PC-9 (cell line): ENCODE measurements at regions of chr17 and their contacts with region 1.

Region 1: DNA sequence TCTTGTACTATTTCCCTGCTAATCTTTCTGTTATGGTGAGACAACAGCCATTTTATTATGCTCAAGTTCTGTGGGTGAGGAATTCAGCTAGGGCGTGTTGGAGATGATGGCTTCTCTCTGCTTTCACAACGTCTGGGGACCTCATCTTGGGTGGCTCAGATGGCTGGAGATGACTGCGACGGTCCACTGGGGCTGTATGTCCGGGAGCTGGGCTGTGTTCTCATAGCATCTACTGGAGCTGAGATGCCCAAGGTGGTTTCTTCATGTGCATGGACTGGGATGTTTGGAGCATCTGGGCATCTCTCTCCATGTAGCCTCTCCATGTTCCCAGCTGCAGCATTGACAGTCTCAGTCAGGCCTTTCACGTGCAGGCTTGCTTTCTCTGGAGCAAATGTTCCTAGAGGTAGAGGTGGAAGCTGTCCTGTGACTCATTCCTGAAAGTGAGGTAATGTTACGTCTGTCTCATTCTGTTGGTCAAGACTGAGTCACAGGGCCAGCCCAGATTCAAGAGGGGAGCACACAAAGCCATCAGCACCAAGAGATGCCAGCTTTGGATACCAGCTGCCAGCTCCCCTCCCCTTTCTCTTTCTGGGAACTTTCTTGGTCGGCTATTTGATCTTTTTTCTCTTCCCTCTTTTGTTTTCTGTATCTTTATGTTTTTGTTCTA is 96.2 kb downstream of the RAP1GAP2 start:
- DNase-seq: peak; percentile 77 to 90
- H3K4me3 ChIP-seq: no peak overlapping the region
- H3K27ac ChIP-seq: peak overlapping the region; percentile 84
- H3K4me1 ChIP-seq: peaks cover 44% of the 10 kb centered on the region
- H3K27me3 ChIP-seq: no peaks in the 10 kb centered on the region
- CTCF ChIP-seq: no peak

Region 2: DNA sequence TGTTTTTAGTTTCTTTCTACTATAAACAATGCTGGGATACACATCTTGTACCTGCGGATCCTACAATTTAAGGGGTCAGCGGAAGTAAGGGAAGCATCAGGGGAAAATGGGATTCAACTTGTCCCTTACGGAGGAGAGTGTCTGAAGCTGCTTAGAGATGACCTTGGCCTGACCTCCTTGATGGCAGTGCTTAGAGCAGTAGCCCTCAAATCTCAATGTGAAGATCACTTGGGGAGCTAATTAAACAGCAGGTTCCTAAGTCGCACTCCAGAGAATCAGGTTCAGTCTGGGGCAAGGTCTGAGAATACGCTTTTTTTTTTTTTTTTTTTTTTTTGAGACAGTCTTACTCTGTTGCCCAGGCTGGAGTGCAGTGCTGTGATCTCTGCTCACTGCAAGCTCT is 371.2 kb before region 1 on chr17:
- CTCF ChIA-PET with region 1: no interaction called
- POLR2A ChIA-PET with region 1: interaction called, 39 read pairs
- intact Hi-C with region 1: no loop called
- DNase-seq: no peak
- H3K4me3 ChIP-seq: no peak overlapping the region
- H3K27ac ChIP-seq: no peak overlapping the region
- H3K4me1 ChIP-seq: no peaks in the 10 kb centered on the region
- H3K27me3 ChIP-seq: no peaks in the 10 kb centered on the region
- CTCF ChIP-seq: no peak

Region 3: DNA sequence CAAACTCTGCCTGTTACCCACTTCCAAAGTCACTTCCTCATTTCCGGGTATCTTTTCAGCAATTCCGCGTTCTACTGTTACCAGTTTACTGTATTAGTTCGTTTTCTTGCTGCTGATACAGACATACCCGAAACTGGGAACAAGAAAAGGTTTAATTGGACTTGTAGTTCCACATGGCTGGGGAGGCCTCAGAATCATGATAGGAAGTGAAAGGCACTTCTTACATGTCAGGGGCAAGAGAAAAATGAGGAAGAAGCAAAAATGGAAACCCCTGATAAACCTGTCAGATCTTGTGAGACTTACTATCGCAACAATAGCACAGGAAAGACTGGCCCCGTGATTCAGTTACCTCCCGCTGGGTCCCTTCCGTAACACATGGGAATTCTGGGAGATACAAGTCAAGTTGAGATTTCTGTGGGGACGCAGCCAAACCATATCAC is 268.1 kb before region 1 on chr17:
- CTCF ChIA-PET with region 1: no interaction called
- POLR2A ChIA-PET with region 1: no interaction called
- intact Hi-C with region 1: no loop called
- DNase-seq: no peak
- H3K4me3 ChIP-seq: no peak overlapping the region
- H3K27ac ChIP-seq: no peak overlapping the region
- H3K4me1 ChIP-seq: no peaks in the 10 kb centered on the region
- H3K27me3 ChIP-seq: no peaks in the 10 kb centered on the region
- CTCF ChIP-seq: no peak

Region 4: DNA sequence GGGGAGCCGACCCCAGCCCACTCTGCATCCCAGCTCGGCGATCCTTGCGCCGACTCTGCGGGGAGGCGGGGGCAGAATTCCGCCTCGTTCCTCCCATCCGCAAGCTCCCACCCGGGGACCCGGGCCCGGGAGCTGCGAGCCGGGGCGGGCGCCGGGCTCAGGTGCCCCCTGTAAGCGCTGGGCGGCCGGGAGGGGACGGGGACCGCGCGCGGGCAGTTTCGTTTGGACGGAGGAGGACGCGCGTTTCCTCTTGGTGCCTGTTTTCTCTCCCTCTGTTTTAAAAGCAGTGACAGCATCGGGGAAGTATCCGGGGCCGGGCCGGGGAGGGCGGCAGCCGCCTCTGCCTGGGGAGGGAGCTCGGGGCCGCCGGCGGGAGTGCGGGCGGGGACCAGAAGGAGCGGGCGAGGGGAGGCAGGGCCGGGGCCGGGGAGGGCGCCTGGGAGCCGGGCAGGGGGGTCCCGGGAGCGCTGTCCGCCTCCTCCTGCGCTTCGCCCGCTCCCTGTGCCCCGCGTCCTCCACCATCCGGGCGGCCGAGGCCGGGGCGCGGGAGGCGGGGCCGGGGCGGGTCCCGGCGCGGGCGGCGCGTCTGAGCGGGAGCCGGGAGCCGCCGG is 39.2 kb before region 1 on chr17:
- CTCF ChIA-PET with region 1: no interaction called
- POLR2A ChIA-PET with region 1: no interaction called
- intact Hi-C with region 1: loop called (anchors 1 kb)
- DNase-seq: peak in 1 of 2 experiments; percentile 67
- H3K4me3 ChIP-seq: peak overlapping the region; percentile 89; the same call in 1 of the 2 replicates
- H3K27ac ChIP-seq: no peak overlapping the region
- H3K4me1 ChIP-seq: peaks cover 11% of the 10 kb centered on the region; the same call in 1 of the 2 replicates
- H3K27me3 ChIP-seq: 0 out of 2 replicates have a peak, but pooled peaks cover 6% of the 10 kb centered on the region
- CTCF ChIP-seq: no peak

Region 5: GRCh38 chr17:3157218-3157617 is 264.8 kb after region 1 on chr17:
- CTCF ChIA-PET with region 1: no interaction called
- POLR2A ChIA-PET with region 1: no interaction called
- intact Hi-C with region 1: no loop called
- DNase-seq: no peak
- H3K4me3 ChIP-seq: no peak overlapping the region
- H3K27ac ChIP-seq: no peak overlapping the region
- H3K4me1 ChIP-seq: no peaks in the 10 kb centered on the region
- H3K27me3 ChIP-seq: peaks cover 73% of the 10 kb centered on the region
- CTCF ChIP-seq: no peak